ENCODE measurements at regions of chr9 and their contacts with region 1.

Region 1: DNA sequence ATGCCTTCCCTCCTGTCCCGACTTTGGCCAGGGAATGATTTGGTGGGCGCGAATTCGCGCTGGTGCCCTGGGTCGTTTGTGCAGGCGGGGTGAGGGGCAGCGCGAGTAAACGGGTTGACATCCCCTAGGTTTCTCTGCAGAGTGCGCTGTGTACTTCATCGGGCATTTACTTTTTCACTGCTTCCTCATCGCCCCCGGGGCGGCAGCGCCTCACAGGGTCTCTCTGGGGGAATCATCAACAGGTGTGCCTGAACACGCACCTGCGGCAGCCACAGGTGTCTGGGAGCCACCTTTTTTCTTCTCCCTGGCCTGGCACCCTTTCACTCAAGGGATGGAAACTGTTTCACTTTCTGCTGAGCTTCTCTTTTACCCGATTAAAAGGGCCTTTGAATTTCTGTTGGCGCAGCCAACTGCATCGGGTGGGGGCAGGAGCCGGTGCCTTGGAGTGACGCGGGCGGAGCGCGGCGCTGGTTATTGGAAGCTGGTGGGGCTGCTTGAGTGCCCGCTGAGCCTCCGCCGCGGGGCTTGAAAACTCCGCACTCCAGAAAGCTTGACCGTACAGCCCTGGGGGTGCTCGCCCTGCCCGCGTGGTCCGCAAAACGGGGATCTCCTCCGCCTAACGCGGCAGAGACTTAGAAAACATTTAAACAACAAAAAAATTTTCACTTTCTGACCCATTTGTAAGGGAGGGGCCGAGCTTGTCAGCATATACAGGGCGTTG is 52.1 kb upstream of the TJP2 start:
- DNase-seq: peak in 1 of 2 experiments; percentile 68
- H3K4me3 ChIP-seq: peak overlapping the region; percentile 85 to 91 (median 88)
- H3K27ac ChIP-seq: peak overlapping the region; percentile 96
- H3K4me1 ChIP-seq: peaks cover 6 to 8% (median 7%) of the 10 kb centered on the region in 4 experiments
- H3K27me3 ChIP-seq: no peaks in the 10 kb centered on the region
- CTCF ChIP-seq: peak in 2 of 3 experiments; percentile 1 to 3; a peak in 1 of 4 replicates
- EP300 ChIP-seq: no peak
- POLR2A ChIP-seq: 0 out of 3 replicates have a peak, but pooled peaks of 1 of the 2 experiments have one; percentile 12
- RAD21 ChIP-seq: 0 out of 4 replicates have a peak, but pooled peaks of 1 of the 2 experiments have one; percentile 6

Region 2: GRCh38 chr9:69044240-69045219 is 77.5 kb before region 1 on chr9:
- CTCF ChIA-PET with region 1: interaction called, 3 read pairs
- POLR2A ChIA-PET with region 1: interaction called, 10 read pairs
- DNase-seq: no peak
- H3K4me3 ChIP-seq: no peak overlapping the region
- H3K27ac ChIP-seq: no peak overlapping the region
- H3K4me1 ChIP-seq: peaks cover 9 to 22% (median 14%) of the 10 kb centered on the region in 4 experiments
- H3K27me3 ChIP-seq: no peaks in the 10 kb centered on the region
- CTCF ChIP-seq: no peak
- EP300 ChIP-seq: no peak
- POLR2A ChIP-seq: no peak
- RAD21 ChIP-seq: no peak

Region 3: DNA sequence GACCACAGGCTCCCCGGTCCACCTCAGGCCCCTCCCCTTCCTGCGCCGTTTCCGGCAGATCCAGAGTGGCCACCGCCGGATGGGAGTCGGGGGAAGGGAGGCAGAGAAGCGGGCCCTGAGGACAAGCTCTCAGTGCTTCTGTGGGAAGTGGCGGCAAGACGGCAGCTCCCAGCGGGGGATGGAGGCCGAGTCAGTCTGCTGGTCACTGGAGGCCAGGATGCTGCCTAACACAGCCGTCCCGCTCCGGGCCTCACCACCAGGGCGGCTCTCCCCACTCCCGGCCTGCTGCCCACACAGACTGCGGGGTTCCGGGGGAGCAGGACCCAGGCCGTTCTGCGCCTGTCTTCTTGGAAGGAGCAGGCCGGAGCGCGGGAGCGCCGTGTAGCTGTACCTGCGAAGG is 55.0 kb before region 1 on chr9:
- CTCF ChIA-PET with region 1: no interaction called
- POLR2A ChIA-PET with region 1: interaction called, 13 read pairs
- DNase-seq: peak in 1 of 2 experiments; percentile 71
- H3K4me3 ChIP-seq: no peak overlapping the region
- H3K27ac ChIP-seq: no peak overlapping the region
- H3K4me1 ChIP-seq: peaks cover 2 to 3% (median 2%) of the 10 kb centered on the region in 4 experiments; a peak in 4 of 7 replicates
- H3K27me3 ChIP-seq: no peaks in the 10 kb centered on the region
- CTCF ChIP-seq: peak in 2 of 3 experiments; percentile 55 to 60; a peak in 2 of 4 replicates
- EP300 ChIP-seq: no peak
- POLR2A ChIP-seq: no peak
- RAD21 ChIP-seq: peak; percentile 15 to 43; a peak in 3 of 4 replicates

Region 4: GRCh38 chr9:69085569-69086283 is 36.3 kb before region 1 on chr9:
- CTCF ChIA-PET with region 1: interaction called, 6 read pairs
- POLR2A ChIA-PET with region 1: interaction called, 28 read pairs
- DNase-seq: no peak
- H3K4me3 ChIP-seq: no peak overlapping the region
- H3K27ac ChIP-seq: no peak overlapping the region
- H3K4me1 ChIP-seq: peaks cover 0 to 15% (median 9%) of the 10 kb centered on the region in 4 experiments; a peak in 6 of 7 replicates
- H3K27me3 ChIP-seq: no peaks in the 10 kb centered on the region
- CTCF ChIP-seq: no peak
- EP300 ChIP-seq: no peak
- POLR2A ChIP-seq: no peak
- RAD21 ChIP-seq: no peak

Region 5: GRCh38 chr9:69093471-69094103 is 28.4 kb before region 1 on chr9:
- CTCF ChIA-PET with region 1: interaction called, 6 read pairs
- POLR2A ChIA-PET with region 1: interaction called, 28 read pairs
- DNase-seq: no peak
- H3K4me3 ChIP-seq: no peak overlapping the region
- H3K27ac ChIP-seq: no peak overlapping the region
- H3K4me1 ChIP-seq: peaks cover 0 to 13% (median 8%) of the 10 kb centered on the region in 4 experiments; a peak in 6 of 7 replicates
- H3K27me3 ChIP-seq: no peaks in the 10 kb centered on the region
- CTCF ChIP-seq: no peak
- EP300 ChIP-seq: no peak
- POLR2A ChIP-seq: no peak
- RAD21 ChIP-seq: no peak

Region 6: GRCh38 chr9:69104830-69105527 is 17.0 kb before region 1 on chr9:
- CTCF ChIA-PET with region 1: interaction called, 4 read pairs
- POLR2A ChIA-PET with region 1: interaction called, 54 read pairs
- DNase-seq: peak; percentile 56 to 62
- H3K4me3 ChIP-seq: no peak overlapping the region
- H3K27ac ChIP-seq: no peak overlapping the region
- H3K4me1 ChIP-seq: peaks cover 0 to 6% (median 2%) of the 10 kb centered on the region in 4 experiments; a peak in 4 of 7 replicates
- H3K27me3 ChIP-seq: no peaks in the 10 kb centered on the region
- CTCF ChIP-seq: no peak
- EP300 ChIP-seq: no peak
- POLR2A ChIP-seq: peak in 1 of 2 experiments; percentile 73; a peak in 2 of 3 replicates
- RAD21 ChIP-seq: no peak; a peak in 1 of 4 replicates

Region 7: GRCh38 chr9:69149321-69149807 is 27.4 kb after region 1 on chr9:
- CTCF ChIA-PET with region 1: interaction called, 3 read pairs
- POLR2A ChIA-PET with region 1: interaction called, 10 read pairs
- DNase-seq: peak in 1 of 2 experiments; percentile 35
- H3K4me3 ChIP-seq: no peak overlapping the region
- H3K27ac ChIP-seq: no peak overlapping the region
- H3K4me1 ChIP-seq: peaks cover 0 to 5% (median 0%) of the 10 kb centered on the region in 4 experiments; a peak in 2 of 7 replicates
- H3K27me3 ChIP-seq: no peaks in the 10 kb centered on the region
- CTCF ChIP-seq: peak in 2 of 3 experiments; percentile 8 to 13; a peak in 1 of 4 replicates
- EP300 ChIP-seq: no peak
- POLR2A ChIP-seq: no peak
- RAD21 ChIP-seq: peak; percentile 6 to 41; a peak in 2 of 4 replicates

Measured in H1 (cell line).